T-cell (primary cell): ENCODE measurements at regions of chr12 and their contacts with region 1.

Region 1: GRCh38 chr12:67546746-67547145 is 101.8 kb upstream of the DYRK2 start:
- DNase-seq: no peak
- ATAC-seq: no peak
- H3K4me3 ChIP-seq: no peak overlapping the region
- H3K4me3 Mint-ChIP-seq: no peak overlapping the region
- H3K27ac ChIP-seq: no peak overlapping the region
- H3K27ac Mint-ChIP-seq: no peak overlapping the region
- H3K4me1 ChIP-seq: peaks cover 3 to 4% of the 10 kb centered on the region in 2 experiments
- H3K4me1 Mint-ChIP-seq: peaks cover 34 to 38% (median 38%) of the 10 kb centered on the region in 3 donors
- H3K27me3 ChIP-seq: no peaks in the 10 kb centered on the region
- H3K27me3 Mint-ChIP-seq: no peaks in the 10 kb centered on the region

Region 2: GRCh38 chr12:66925087-66925486 is 621.7 kb before region 1 on chr12:
- CTCF ChIA-PET with region 1: no interaction called
- POLR2A ChIA-PET with region 1: no interaction called
- DNase-seq: no peak
- ATAC-seq: no peak
- H3K4me3 ChIP-seq: no peak overlapping the region
- H3K4me3 Mint-ChIP-seq: peak overlapping the region in 1 of 3 donors; percentile 16
- H3K27ac ChIP-seq: no peak overlapping the region
- H3K27ac Mint-ChIP-seq: no peak overlapping the region
- H3K4me1 ChIP-seq: peaks cover 0 to 38% of the 10 kb centered on the region in 2 experiments
- H3K4me1 Mint-ChIP-seq: peaks cover 11 to 60% (median 37%) of the 10 kb centered on the region in 3 donors
- H3K27me3 ChIP-seq: no peaks in the 10 kb centered on the region
- H3K27me3 Mint-ChIP-seq: no peaks in the 10 kb centered on the region

Region 3: GRCh38 chr12:68231229-68231628 is 684.5 kb after region 1 on chr12:
- CTCF ChIA-PET with region 1: no interaction called
- POLR2A ChIA-PET with region 1: interaction called in 1 of 2 experiments, 11 read pairs
- DNase-seq: no peak
- ATAC-seq: no peak
- H3K4me3 ChIP-seq: no peak overlapping the region
- H3K4me3 Mint-ChIP-seq: no peak overlapping the region
- H3K27ac ChIP-seq: no peak overlapping the region
- H3K27ac Mint-ChIP-seq: no peak overlapping the region
- H3K4me1 ChIP-seq: peaks cover 2 to 4% of the 10 kb centered on the region in 2 experiments
- H3K4me1 Mint-ChIP-seq: peaks cover 12 to 19% (median 19%) of the 10 kb centered on the region in 3 donors
- H3K27me3 ChIP-seq: no peaks in the 10 kb centered on the region
- H3K27me3 Mint-ChIP-seq: no peaks in the 10 kb centered on the region